ENCODE measurements at regions of chr12 and their contacts with region 1.

Region 1: GRCh38 chr12:751192-751998 is 984 bp upstream of the WNK1 start:
- DNase-seq: peak; percentile 96
- ATAC-seq: peak; percentile 56 to 73

Region 2: GRCh38 chr12:575948-576612 is 175.3 kb before region 1 on chr12:
- intact Hi-C with region 1: loop called in 1 of 2 experiments (anchors 10 kb)
- DNase-seq: peak; percentile 84
- ATAC-seq: peak; percentile 64 to 69

Region 3: GRCh38 chr12:642633-643474 is 108.5 kb before region 1 on chr12:
- intact Hi-C with region 1: loop called in 1 of 2 experiments (anchors 2 kb)
- DNase-seq: peak; percentile 87
- ATAC-seq: peak; percentile 78 to 89

Region 4: DNA sequence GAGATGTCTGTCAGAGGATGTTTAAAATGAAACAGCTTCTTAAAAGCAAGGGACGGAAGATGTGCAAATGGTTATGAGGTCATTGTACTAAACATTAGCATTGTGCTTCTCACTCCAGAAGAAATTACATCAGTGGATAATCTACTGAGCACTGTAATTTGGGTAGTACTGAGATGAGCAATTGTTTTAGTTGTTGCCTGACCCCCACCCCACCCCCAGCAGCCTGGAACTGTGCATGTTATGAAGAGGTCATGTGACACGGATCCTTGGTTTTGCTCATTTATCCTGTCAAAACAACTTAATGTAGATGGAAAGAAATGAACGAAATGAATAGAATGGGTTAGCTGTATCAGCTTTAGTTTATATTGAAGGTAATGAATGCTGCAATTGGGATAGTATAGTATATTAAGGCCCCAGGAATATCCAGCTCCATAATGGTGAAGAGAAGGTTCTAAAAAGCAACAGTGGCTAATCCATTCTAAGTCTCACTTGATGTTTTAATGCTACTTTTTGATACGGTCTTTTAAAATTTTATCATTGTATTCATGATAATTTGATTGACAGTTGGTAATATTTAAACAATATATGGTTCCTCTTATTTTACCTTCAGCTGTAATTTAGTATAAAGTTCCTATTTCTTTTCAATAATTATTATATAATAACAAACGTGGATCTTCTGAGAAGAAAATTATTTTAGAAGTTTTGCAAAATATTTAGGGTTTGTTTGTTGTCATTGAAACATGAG is 59.4 kb after region 1 on chr12:
- intact Hi-C with region 1: loop called (anchors 5 to 10 kb)
- DNase-seq: no peak
- ATAC-seq: no peak